CD4-positive, alpha-beta T cell (primary cell): ENCODE measurements at regions of chr22 and their contacts with region 1.

Region 1: GRCh38 chr22:28442264-28442710 is 237.4 kb downstream of the TTC28 start:
- DNase-seq: peak; percentile 36 to 80 (median 57)
- ATAC-seq: peak; percentile 88
- H3K4me3 ChIP-seq: peak overlapping the region; percentile 61
- H3K4me3 Mint-ChIP-seq: peak overlapping the region; percentile 95
- H3K27ac ChIP-seq: no peak overlapping the region
- H3K27ac Mint-ChIP-seq: peak overlapping the region; percentile 70
- H3K4me1 ChIP-seq: peaks cover 18% of the 10 kb centered on the region
- H3K4me1 Mint-ChIP-seq: peaks cover 24% of the 10 kb centered on the region
- H3K27me3 ChIP-seq: peaks cover 13 to 22% of the 10 kb centered on the region in 2 experiments
- H3K27me3 Mint-ChIP-seq: peaks cover 4% of the 10 kb centered on the region
- CTCF ChIP-seq: peak; percentile 75

Region 2: DNA sequence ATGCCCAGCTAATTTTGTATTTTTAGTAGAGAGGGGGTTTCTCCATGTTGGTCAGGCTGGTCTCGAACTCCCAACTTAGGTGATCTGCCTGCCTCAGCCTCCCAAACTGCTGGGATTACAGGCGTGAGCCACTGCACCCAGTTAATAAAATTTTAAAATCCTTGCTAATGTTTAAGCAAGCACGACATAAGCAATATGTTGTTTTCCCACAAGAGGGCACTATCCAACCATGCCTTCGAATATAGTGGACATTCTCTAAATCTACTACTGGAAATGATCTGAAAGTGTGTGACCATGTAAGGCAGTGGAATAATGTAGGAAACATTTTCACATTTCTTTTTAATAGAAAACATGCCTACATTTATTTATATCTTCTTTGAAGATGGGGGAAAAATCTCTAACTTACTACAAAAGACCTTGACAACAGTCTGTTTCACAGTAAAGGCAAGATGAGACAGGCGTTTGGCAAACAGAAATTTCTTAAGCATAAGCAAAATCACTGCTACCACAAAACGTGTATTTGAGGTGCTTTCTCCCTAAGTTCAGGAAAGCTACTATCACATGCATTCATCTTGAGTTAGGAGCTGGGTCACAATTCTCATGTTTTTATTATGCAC is 561.4 kb before region 1 on chr22:
- CTCF ChIA-PET with region 1: no interaction called
- POLR2A ChIA-PET with region 1: no interaction called
- intact Hi-C with region 1: loop called (anchors 5 to 10 kb)
- DNase-seq: peak in 4 of 14 experiments; percentile 6 to 66 (median 53)
- ATAC-seq: peak; percentile 52
- H3K4me3 ChIP-seq: no peak overlapping the region
- H3K4me3 Mint-ChIP-seq: no peak overlapping the region
- H3K27ac ChIP-seq: no peak overlapping the region
- H3K27ac Mint-ChIP-seq: no peak overlapping the region
- H3K4me1 ChIP-seq: peaks cover 3% of the 10 kb centered on the region
- H3K4me1 Mint-ChIP-seq: peaks cover 37% of the 10 kb centered on the region
- H3K27me3 ChIP-seq: no peaks in the 10 kb centered on the region
- H3K27me3 Mint-ChIP-seq: no peaks in the 10 kb centered on the region
- CTCF ChIP-seq: peak; percentile 63

Region 3: DNA sequence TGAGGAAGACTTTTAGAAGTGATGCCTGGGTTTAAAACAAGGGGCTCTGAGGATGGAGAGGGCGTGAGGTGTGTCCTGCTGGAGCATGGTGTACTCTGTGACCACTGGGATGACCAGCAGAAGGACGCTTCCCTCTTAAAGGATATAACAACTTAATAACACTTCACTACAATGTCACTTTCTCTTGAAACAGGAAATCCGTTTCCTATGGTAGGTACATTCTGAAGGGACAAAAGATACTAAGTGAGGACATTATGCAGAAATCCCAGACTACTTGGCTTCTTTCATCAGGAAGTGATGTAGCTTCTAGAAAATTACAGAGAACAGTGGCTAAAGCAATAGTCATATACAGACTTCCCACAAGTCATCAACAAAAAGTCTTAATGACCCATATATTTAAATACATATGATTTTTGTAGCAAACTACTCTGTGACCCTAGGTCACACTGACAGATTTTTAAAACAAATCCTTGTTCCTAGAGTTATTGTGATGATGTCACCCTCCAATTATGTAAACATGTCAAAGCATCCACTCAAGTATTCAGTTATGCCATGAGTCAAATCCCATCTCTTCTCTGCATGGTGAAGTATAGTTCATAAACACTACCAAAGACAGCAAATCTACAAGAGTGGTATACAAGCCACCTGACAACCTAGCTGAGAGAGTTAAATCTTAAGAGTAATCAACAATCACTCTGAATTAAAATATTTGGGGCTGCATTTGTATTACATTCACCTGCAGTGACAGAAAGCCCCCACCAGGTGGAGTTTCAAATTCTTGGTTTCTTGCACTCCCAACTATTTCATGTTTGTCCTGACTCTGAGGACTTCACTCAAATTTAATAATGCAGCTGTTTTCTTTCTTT is 556.1 kb before region 1 on chr22:
- CTCF ChIA-PET with region 1: no interaction called
- POLR2A ChIA-PET with region 1: no interaction called
- intact Hi-C with region 1: loop called (anchors 5 to 10 kb)
- DNase-seq: peak; percentile 13 to 65 (median 30)
- ATAC-seq: peak; percentile 55
- H3K4me3 ChIP-seq: no peak overlapping the region
- H3K4me3 Mint-ChIP-seq: no peak overlapping the region
- H3K27ac ChIP-seq: no peak overlapping the region
- H3K27ac Mint-ChIP-seq: peak overlapping the region; percentile 27
- H3K4me1 ChIP-seq: no peaks in the 10 kb centered on the region
- H3K4me1 Mint-ChIP-seq: peaks cover 21% of the 10 kb centered on the region
- H3K27me3 ChIP-seq: no peaks in the 10 kb centered on the region
- H3K27me3 Mint-ChIP-seq: no peaks in the 10 kb centered on the region
- CTCF ChIP-seq: peak; percentile 88

Region 4: DNA sequence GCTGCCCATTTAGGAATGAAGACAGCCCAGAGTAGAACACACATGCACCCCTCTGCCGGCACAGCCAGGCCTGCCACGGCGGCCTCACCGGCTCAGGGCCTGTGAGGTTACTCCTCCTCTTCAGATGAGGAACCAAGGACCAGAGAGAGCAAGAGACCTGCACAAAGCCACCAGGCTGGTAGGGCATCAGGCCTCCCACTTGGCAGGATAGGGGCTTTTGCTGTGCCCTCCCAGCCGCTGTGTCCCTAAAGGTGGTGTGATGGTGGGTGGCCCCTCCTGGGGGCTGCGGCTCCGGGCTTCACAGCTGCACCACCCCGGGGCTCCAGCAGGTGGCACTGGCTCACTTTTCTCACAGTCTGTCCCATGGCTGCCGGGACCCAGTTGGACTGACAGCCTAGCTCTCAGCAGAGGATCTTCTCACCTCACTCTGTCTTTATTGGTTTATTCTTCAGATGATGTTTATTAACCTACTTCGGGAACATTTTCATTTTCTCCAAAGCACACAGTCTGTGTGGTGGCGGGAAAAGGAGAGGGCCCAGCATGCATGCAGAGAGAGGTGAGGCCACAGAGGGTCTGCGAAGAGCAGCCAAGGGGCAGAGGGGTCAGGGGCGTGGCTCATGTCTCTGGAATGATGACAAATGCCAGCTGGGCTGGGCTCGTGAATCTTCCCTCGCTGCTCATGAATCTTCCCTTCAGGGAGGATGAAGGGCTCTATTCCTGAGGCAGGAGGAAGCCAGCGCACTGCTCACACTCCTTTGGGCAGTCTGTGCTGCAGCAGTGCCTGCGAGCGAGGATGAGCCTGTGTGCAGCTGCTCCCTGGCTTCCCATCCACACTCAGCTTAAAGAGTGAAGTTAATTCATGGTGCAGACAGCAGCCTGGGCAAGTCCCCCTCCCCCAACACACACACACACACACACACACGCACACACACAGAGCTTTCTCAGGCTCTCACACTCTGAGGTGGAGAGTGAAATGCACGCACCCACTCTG is 422.1 kb before region 1 on chr22:
- CTCF ChIA-PET with region 1: no interaction called
- POLR2A ChIA-PET with region 1: no interaction called
- intact Hi-C with region 1: loop called (anchors 1 to 2 kb)
- DNase-seq: peak; percentile 44 to 74 (median 55)
- ATAC-seq: peak; percentile 84
- H3K4me3 ChIP-seq: no peak overlapping the region
- H3K4me3 Mint-ChIP-seq: no peak overlapping the region
- H3K27ac ChIP-seq: no peak overlapping the region
- H3K27ac Mint-ChIP-seq: no peak overlapping the region
- H3K4me1 ChIP-seq: peaks cover 6% of the 10 kb centered on the region
- H3K4me1 Mint-ChIP-seq: no peaks in the 10 kb centered on the region
- H3K27me3 ChIP-seq: no peaks in the 10 kb centered on the region
- H3K27me3 Mint-ChIP-seq: no peaks in the 10 kb centered on the region
- CTCF ChIP-seq: peak; percentile 87

Region 5: GRCh38 chr22:28051787-28052356 is 390.4 kb before region 1 on chr22:
- CTCF ChIA-PET with region 1: no interaction called
- POLR2A ChIA-PET with region 1: interaction called, 4 read pairs
- intact Hi-C with region 1: loop called in 1 of 2 experiments (anchors 5 kb)
- DNase-seq: peak in 7 of 14 experiments; percentile 6 to 46 (median 18)
- ATAC-seq: no peak
- H3K4me3 ChIP-seq: no peak overlapping the region
- H3K4me3 Mint-ChIP-seq: no peak overlapping the region
- H3K27ac ChIP-seq: no peak overlapping the region
- H3K27ac Mint-ChIP-seq: no peak overlapping the region
- H3K4me1 ChIP-seq: no peaks in the 10 kb centered on the region
- H3K4me1 Mint-ChIP-seq: no peaks in the 10 kb centered on the region
- H3K27me3 ChIP-seq: no peaks in the 10 kb centered on the region
- H3K27me3 Mint-ChIP-seq: no peaks in the 10 kb centered on the region
- CTCF ChIP-seq: peak; percentile 60

Region 6: DNA sequence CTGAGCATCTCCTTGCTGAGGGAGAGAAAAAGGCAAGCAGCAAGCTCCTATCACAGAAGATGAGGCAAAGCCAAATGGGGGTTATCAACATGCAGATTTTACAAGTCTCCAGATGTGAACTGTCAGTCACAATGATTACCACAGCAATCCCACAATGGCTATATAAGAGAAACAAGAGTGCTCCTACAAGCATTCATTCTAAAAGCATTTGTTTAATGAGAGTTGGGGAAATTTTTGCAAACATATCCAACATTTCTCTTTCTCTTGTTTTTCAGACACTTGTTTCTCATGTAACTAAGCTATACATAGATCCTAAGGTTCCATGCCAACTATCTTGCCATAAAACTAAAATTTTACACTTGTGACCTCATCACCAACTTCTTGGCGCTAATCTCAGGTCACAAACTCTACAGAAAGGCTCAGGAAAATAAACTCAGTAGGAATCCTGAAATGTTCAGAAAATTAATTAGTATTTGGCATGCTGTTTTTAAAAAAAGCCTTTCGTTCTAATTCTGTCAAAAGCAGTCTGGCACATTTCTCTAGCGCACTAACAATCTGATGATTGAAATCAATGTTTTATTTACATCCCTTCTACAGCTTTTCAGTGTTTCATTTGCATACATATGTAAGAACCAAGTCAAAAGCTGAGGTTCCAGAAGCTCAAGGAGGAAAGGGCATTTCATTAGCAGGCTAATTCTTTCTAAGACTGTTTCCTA is 37.9 kb after region 1 on chr22:
- CTCF ChIA-PET with region 1: no interaction called
- POLR2A ChIA-PET with region 1: no interaction called
- intact Hi-C with region 1: no loop called
- DNase-seq: no peak
- ATAC-seq: no peak
- H3K4me3 ChIP-seq: no peak overlapping the region
- H3K4me3 Mint-ChIP-seq: no peak overlapping the region
- H3K27ac ChIP-seq: no peak overlapping the region
- H3K27ac Mint-ChIP-seq: no peak overlapping the region
- H3K4me1 ChIP-seq: no peaks in the 10 kb centered on the region
- H3K4me1 Mint-ChIP-seq: no peaks in the 10 kb centered on the region
- H3K27me3 ChIP-seq: peaks cover 0 to 5% of the 10 kb centered on the region in 2 experiments
- H3K27me3 Mint-ChIP-seq: peaks cover 24% of the 10 kb centered on the region
- CTCF ChIP-seq: no peak

Region 7: DNA sequence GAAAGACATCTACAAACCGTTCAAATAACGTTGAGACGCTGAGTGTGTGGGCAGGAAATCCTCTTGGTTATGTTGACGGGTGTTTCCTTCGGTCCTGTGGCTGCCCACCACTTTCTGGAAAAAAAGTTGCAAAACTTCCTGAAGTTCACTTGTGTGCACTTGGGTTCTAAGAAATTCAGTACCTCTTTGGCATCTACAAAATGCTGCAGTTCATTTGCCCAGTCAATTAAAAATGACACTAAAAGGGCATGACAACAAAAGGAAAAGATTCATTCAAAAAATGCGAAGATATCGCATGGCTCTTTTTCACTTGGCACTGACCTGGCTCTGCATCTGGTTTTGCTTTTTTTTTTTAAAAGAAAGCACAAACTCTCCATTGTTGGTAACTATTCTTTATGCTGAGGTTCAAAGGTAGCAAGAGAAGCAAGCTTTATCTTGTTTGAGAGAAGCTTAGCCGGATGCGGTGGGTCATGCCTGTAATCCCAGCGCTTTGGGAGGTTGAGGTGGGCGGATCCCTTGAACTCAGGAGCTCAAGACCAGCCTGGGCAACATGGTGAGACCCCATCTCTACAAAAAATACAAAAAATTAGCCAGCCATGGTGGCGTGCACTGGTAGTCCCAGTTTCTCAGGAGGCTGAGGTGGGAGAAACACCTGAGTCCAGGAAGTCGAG is 368.7 kb after region 1 on chr22:
- CTCF ChIA-PET with region 1: no interaction called
- POLR2A ChIA-PET with region 1: no interaction called
- intact Hi-C with region 1: loop called in 1 of 2 experiments (anchors 5 kb)
- DNase-seq: peak in 6 of 14 experiments; percentile 20 to 85 (median 52)
- ATAC-seq: peak; percentile 68
- H3K4me3 ChIP-seq: peak overlapping the region; percentile 43
- H3K4me3 Mint-ChIP-seq: peak overlapping the region; percentile 69
- H3K27ac ChIP-seq: peak overlapping the region; percentile 48 to 59
- H3K27ac Mint-ChIP-seq: peak overlapping the region; percentile 81
- H3K4me1 ChIP-seq: peaks cover 65% of the 10 kb centered on the region
- H3K4me1 Mint-ChIP-seq: peaks cover 72% of the 10 kb centered on the region
- H3K27me3 ChIP-seq: no peaks in the 10 kb centered on the region
- H3K27me3 Mint-ChIP-seq: no peaks in the 10 kb centered on the region
- CTCF ChIP-seq: no peak